Activated B cell treated with CpG ODN at 0.5 μM for 24 hours (primary cell): ENCODE measurements at regions of chr2 and their contacts with region 1.

Region 1: DNA sequence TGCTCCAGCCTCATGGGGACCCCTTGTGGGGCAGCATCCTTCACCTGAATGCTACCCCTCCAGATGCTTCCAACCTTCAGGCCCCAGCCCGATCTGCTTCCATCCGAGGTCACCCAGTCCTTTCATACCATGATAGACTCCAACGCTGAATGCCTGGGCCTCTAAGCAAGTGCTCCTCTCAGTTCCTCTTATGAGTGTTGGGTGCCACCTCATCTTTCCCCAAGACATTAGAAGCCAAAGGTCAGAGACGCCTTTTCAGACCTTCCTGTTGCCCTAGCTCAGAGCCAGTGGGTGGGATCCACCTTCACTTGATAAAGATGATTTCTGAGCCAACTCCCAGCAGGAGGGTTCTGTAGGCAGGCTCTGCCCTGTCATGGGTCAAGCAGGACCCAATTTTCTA is 174.5 kb upstream of the MGAT5 start:
- DNase-seq: peak; percentile 23
- ATAC-seq: peak; percentile 97
- H3K4me3 Mint-ChIP-seq: no peak overlapping the region
- H3K27ac Mint-ChIP-seq: peak overlapping the region; percentile 32
- H3K4me1 Mint-ChIP-seq: peaks cover 23% of the 10 kb centered on the region
- H3K27me3 Mint-ChIP-seq: no peaks in the 10 kb centered on the region
- CTCF ChIP-seq: no peak

Region 2: DNA sequence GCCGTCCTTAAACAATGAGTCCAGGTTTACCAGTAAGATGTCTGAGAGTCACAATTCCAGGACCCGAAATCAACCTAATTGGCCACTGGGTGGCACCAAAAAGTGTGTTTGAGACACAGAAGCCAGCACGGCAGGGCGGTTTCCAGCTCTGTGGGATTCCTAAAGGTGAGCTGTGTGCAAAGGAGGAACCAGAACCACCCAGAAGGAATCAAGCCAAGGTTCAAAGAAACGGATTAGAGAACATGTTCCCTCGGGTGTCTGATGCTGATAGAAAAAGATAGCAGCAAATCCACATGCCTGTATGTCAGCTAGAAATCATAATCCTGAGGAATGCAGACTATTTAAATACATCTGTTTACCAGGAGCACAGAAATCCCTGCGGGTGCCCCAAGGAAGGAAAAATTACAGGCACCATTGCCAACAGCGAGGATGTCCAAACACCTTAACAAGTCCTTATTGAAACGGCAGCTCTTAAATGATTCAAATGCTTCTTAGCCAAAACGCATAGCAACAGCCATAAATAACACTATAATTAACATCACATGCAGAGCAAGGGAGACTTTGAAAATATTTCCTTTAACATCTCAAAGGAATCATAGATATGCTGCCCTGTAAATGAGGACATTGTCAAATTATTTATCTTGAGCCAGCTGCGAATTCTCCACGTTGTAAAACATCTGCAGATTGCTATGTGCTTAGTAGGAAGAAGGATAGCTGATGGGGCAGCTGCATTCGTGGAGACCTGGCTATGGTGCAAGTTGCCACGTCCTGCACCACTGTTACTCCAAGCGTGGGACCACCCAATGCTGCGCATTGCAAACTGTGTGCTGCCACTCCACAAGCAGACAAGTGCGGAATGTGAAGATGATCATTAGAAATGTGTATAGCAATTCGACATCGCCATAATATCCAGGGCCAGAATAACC is 192.4 kb before region 1 on chr2:
- CTCF ChIA-PET with region 1: interaction called, 4 read pairs
- POLR2A ChIA-PET with region 1: no interaction called
- intact Hi-C with region 1: loop called (anchors 1 kb)
- DNase-seq: peak; percentile 36
- ATAC-seq: peak; percentile 70
- H3K4me3 Mint-ChIP-seq: no peak overlapping the region
- H3K27ac Mint-ChIP-seq: no peak overlapping the region
- H3K4me1 Mint-ChIP-seq: peaks cover 10% of the 10 kb centered on the region
- H3K27me3 Mint-ChIP-seq: peaks cover 7% of the 10 kb centered on the region
- CTCF ChIP-seq: no peak

Region 3: GRCh38 chr2:133986081-133986837 is 93.1 kb before region 1 on chr2:
- CTCF ChIA-PET with region 1: no interaction called
- POLR2A ChIA-PET with region 1: no interaction called
- intact Hi-C with region 1: no loop called
- DNase-seq: no peak
- ATAC-seq: no peak
- H3K4me3 Mint-ChIP-seq: no peak overlapping the region
- H3K27ac Mint-ChIP-seq: no peak overlapping the region
- H3K4me1 Mint-ChIP-seq: no peaks in the 10 kb centered on the region
- H3K27me3 Mint-ChIP-seq: peaks cover 4% of the 10 kb centered on the region
- CTCF ChIP-seq: no peak

Region 4: GRCh38 chr2:134021830-134022524 is 57.4 kb before region 1 on chr2:
- CTCF ChIA-PET with region 1: no interaction called
- POLR2A ChIA-PET with region 1: interaction called, 5 read pairs
- intact Hi-C with region 1: loop called (anchors 1 kb)
- DNase-seq: no peak
- ATAC-seq: peak; percentile 98
- H3K4me3 Mint-ChIP-seq: peak overlapping the region; percentile 35
- H3K27ac Mint-ChIP-seq: peak overlapping the region; percentile 74
- H3K4me1 Mint-ChIP-seq: peaks cover 35% of the 10 kb centered on the region
- H3K27me3 Mint-ChIP-seq: no peaks in the 10 kb centered on the region
- CTCF ChIP-seq: no peak